ENCODE measurements at regions of chrX and their contacts with region 1.

Region 1: GRCh38 chrX:51144852-51145442 is 187.7 kb upstream of the NUDT10 start:
- DNase-seq: peak; percentile 41 to 51
- H3K4me3 ChIP-seq: no peak overlapping the region
- H3K4me3 Mint-ChIP-seq: no peak overlapping the region
- H3K27ac Mint-ChIP-seq: no peak overlapping the region
- H3K4me1 ChIP-seq: no peaks in the 10 kb centered on the region
- H3K4me1 Mint-ChIP-seq: no peaks in the 10 kb centered on the region
- H3K27me3 ChIP-seq: no peaks in the 10 kb centered on the region
- H3K27me3 Mint-ChIP-seq: peaks cover 12% of the 10 kb centered on the region
- CTCF ChIP-seq: peak; percentile 43 to 61

Region 2: DNA sequence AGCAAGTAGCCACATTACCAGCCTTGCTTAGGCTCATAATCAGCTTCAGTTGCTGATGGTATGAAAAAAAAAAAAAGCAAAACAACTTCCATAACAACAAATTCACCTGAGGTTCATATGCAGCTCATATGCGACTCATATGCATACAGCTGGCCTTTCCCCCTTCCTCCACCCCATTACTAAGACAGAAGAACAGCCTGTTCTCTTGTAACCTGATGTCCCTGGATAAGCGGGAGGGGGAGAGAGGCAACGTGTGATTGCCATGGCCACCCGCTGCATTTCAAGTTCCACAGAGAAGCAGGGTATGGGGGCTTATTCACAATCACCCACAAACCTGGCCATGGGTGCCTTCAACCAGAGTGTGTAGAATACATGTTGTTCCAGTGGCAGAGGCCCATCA is 579.2 kb before region 1 on chrX:
- CTCF ChIA-PET with region 1: no interaction called
- POLR2A ChIA-PET with region 1: no interaction called
- intact Hi-C with region 1: no loop called
- DNase-seq: no peak
- H3K4me3 ChIP-seq: no peak overlapping the region
- H3K4me3 Mint-ChIP-seq: no peak overlapping the region
- H3K27ac Mint-ChIP-seq: no peak overlapping the region
- H3K4me1 ChIP-seq: no peaks in the 10 kb centered on the region
- H3K4me1 Mint-ChIP-seq: no peaks in the 10 kb centered on the region
- H3K27me3 ChIP-seq: no peaks in the 10 kb centered on the region
- H3K27me3 Mint-ChIP-seq: no peaks in the 10 kb centered on the region
- CTCF ChIP-seq: no peak

Region 3: GRCh38 chrX:51169410-51169809 is 24.5 kb after region 1 on chrX:
- CTCF ChIA-PET with region 1: no interaction called
- POLR2A ChIA-PET with region 1: no interaction called
- intact Hi-C with region 1: loop called (anchors 1 kb)
- DNase-seq: no peak
- H3K4me3 ChIP-seq: no peak overlapping the region
- H3K4me3 Mint-ChIP-seq: no peak overlapping the region
- H3K27ac Mint-ChIP-seq: no peak overlapping the region
- H3K4me1 ChIP-seq: no peaks in the 10 kb centered on the region
- H3K4me1 Mint-ChIP-seq: no peaks in the 10 kb centered on the region
- H3K27me3 ChIP-seq: no peaks in the 10 kb centered on the region
- H3K27me3 Mint-ChIP-seq: no peaks in the 10 kb centered on the region
- CTCF ChIP-seq: no peak

Region 4: DNA sequence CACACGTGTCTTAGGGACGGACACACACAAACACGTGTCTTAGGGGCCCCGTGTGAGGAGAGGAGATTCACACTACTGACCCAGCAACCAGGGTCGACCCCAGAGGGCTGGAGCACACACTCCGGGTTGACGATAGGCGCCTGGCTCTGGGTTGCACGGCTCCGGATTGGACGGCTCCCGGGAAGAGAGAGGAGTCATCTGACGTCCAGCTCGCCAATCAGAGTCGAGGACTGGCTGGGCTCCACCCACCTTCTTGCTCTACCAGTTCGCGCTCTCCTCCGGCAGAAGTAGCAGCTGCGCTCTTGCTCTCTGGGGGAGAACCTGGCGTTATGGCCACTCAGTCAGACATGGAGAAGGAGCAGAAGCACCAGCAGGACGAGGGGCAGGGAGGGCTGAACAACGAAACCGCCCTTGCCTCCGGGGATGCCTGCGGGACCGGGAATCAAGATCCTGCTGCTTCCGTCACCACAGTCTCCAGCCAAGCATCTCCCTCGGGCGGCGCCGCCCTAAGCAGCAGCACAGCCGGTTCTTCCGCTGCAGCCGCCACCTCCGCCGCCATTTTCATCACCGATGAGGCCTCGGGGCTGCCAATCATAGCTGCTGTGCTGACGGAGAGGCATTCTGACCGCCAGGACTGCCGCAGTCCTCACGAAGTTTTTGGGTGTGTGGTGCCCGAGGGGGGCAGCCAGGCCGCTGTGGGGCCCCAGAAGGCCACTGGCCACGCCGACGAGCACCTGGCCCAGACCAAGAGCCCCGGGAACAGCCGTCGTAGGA is 261.9 kb after region 1 on chrX:
- CTCF ChIA-PET with region 1: no interaction called
- POLR2A ChIA-PET with region 1: no interaction called
- intact Hi-C with region 1: no loop called
- DNase-seq: no peak
- H3K4me3 ChIP-seq: no peak overlapping the region
- H3K4me3 Mint-ChIP-seq: no peak overlapping the region
- H3K27ac Mint-ChIP-seq: no peak overlapping the region
- H3K4me1 ChIP-seq: no peaks in the 10 kb centered on the region
- H3K4me1 Mint-ChIP-seq: no peaks in the 10 kb centered on the region
- H3K27me3 ChIP-seq: no peaks in the 10 kb centered on the region
- H3K27me3 Mint-ChIP-seq: no peaks in the 10 kb centered on the region
- CTCF ChIP-seq: no peak

Region 5: DNA sequence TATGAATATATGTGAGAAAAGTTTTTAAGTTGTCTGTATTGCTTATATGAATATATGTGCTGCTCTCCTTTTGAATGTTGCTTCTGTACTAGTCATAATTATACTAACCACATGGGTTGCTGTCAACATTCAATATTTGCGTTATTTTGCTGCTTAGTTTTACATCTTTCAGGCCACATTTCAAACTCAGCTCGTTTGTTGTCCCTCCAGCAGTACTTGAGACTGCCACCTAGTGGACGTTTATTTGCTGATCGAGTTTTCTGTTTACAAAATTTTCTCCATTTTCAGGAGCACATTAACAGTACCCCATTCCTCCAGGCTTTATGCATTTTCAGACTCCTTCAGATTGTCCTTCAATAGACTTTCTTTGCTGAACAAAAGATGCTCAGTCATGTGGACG is 275.7 kb after region 1 on chrX:
- CTCF ChIA-PET with region 1: interaction called, 7 read pairs
- POLR2A ChIA-PET with region 1: no interaction called
- intact Hi-C with region 1: loop called (anchors 1 kb)
- DNase-seq: peak in 1 of 2 experiments; percentile 26
- H3K4me3 ChIP-seq: no peak overlapping the region
- H3K4me3 Mint-ChIP-seq: no peak overlapping the region
- H3K27ac Mint-ChIP-seq: no peak overlapping the region
- H3K4me1 ChIP-seq: no peaks in the 10 kb centered on the region
- H3K4me1 Mint-ChIP-seq: no peaks in the 10 kb centered on the region
- H3K27me3 ChIP-seq: no peaks in the 10 kb centered on the region
- H3K27me3 Mint-ChIP-seq: no peaks in the 10 kb centered on the region
- CTCF ChIP-seq: peak; percentile 39 to 61

Region 6: GRCh38 chrX:51461053-51462044 is 316.4 kb after region 1 on chrX:
- CTCF ChIA-PET with region 1: interaction called, 9 read pairs
- POLR2A ChIA-PET with region 1: no interaction called
- intact Hi-C with region 1: loop called (anchors 2 kb)
- DNase-seq: peak in 1 of 2 experiments; percentile 7
- H3K4me3 ChIP-seq: no peak overlapping the region
- H3K4me3 Mint-ChIP-seq: no peak overlapping the region
- H3K27ac Mint-ChIP-seq: no peak overlapping the region
- H3K4me1 ChIP-seq: no peaks in the 10 kb centered on the region
- H3K4me1 Mint-ChIP-seq: no peaks in the 10 kb centered on the region
- H3K27me3 ChIP-seq: no peaks in the 10 kb centered on the region
- H3K27me3 Mint-ChIP-seq: no peaks in the 10 kb centered on the region
- CTCF ChIP-seq: peak; percentile 49 to 53